Breast epithelium (tissue), 4 donors: ENCODE measurements at regions of chr7 and their contacts with region 1.

Region 1: DNA sequence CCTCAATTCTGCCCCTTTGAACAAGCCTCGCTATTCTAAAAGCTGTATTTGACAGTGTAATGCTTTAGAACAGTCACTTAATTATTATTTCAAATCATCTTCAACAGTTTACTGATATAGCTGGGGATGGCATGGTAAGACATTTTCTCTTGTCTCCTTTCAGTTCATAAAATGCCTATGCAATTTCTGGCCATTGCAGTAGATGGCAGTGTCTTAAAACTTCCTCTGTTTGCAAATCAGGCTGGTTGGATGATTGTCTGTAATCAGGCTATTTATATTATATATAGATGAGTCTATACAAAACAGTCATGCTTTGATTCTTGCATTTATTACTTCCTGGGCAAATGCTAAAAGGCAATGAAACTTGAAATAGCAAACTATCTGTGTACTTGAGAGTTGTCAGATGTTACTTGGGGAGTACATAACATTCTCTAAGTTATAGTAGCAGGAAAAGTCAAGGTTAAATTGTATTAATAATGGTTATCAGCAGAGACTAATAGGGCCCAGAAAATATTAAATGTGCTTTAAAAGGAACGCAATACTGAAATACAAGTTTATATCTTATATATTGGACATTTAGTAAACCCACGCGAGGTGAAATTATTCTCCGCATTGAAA is 55.5 kb upstream of the LHFPL3 start:
- DNase-seq: no peak
- H3K4me3 ChIP-seq: no peak overlapping the region
- H3K27ac ChIP-seq: no peak overlapping the region
- H3K4me1 ChIP-seq: no peaks in the 10 kb centered on the region
- H3K27me3 ChIP-seq: no peaks in the 10 kb centered on the region
- CTCF ChIP-seq: no peak
- POLR2A ChIP-seq: no peak

Region 2: DNA sequence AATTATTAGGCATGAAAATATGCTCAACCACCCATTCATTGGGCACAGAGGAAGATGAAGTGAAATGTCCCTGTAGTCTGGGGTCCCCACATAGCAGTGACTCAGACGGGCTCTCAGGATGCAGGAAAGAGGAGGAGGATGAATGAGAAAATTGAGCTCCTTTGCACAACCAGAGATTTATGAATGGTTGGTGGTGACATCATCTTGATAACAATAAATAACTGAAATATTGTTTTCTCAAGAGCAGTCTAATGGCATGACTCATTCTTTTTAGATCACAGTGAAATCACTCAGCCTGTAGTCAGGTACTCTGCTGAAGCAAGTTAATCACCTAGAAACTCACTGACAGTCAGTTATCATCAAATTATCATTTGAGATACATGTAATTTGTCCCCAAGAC is 537.5 kb before region 1 on chr7:
- intact Hi-C with region 1: loop called (anchors 10 kb)
- DNase-seq: no peak
- H3K4me3 ChIP-seq: no peak overlapping the region
- H3K27ac ChIP-seq: no peak overlapping the region
- H3K4me1 ChIP-seq: no peaks in the 10 kb centered on the region
- H3K27me3 ChIP-seq: no peaks in the 10 kb centered on the region
- CTCF ChIP-seq: no peak
- POLR2A ChIP-seq: no peak